ENCODE measurements at regions of chr7 and their contacts with region 1.

Region 1: DNA sequence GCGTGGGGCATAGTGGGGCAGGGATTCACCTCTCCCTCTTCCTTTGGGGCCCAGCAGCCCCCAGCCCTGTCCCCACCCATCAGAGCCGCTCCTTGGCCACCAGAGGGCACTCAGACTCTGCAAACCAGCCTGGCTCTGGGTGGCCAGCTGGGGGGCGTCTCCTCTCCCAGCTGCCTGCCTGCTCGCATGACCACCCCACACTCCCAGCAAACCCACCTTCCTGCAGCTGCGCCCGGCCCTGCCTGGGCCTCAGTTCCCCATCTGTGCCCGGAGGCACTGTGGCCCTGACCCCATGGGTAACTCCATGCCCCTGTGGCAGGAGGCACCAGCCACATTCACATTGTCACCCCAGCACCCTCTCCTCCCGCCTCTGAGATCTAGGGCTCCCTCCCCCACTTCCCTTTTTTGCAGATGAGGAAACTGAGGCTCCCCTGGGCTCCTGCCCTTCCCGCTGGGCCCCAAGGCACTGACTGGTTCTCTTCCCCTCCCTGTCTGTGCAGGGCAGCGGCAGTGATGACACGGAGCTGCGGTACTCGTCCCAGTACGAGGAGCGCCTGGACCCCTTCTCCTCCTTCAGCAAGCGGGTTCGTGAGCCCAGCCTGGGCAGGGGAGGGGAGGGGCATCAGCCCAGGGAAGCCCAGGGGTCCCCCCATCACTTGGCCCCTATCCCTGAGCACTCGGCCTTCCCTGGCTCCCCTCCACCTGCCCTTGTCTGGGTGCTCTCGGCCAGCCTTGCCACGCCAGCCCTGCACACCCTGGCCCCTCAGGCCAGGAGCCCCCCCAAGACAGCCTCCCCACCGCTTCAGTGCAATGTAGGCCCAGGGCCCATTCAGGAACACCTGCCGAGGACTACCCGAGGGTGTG is 6.9 kb upstream of the SH2B2 start:
- DNase-seq: peak; percentile 47 to 77 (median 76)
- ATAC-seq: peak; percentile 76 to 84
- H3K4me3 ChIP-seq: no peak overlapping the region
- H3K27ac ChIP-seq: no peak overlapping the region
- H3K4me1 ChIP-seq: no peaks in the 10 kb centered on the region
- H3K27me3 ChIP-seq: no peaks in the 10 kb centered on the region

Region 2: DNA sequence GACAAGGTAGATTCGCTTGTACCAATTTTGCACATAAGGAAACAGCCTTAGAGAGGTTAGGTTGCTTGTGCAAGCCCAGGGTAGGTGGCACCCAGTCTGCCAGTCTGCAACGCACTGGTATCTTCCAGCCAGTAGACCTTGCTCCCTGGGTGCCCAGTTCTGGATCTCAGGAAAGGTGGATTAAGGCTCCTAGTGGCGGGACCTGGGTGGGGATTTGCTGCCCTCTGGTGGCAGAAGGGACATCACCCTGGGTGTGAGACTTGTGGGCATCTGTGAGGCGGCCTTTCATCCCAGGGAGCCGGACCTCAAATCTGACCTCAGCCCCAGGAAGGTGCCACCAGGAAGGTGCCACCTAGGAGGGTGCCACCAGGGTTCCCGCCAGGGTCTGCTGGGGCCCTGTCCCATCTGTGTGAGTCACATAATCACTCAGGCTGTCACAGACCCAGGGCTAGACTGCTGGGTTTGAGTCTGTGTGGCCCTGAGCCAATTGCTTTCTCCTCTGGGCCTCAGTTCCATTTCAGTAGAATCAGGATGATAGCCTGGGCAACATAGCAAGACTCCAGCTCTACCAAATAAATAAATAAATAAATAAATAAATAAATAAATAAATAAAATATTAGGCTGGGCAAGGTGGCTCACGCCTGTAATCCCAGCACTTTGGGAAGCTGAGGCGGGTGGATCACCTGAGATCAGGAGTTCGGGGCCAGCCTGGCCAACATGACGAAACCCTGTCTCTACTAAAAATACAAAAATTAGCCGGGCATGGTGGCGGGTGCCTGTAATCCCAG is 111.1 kb after region 1 on chr7:
- intact Hi-C with region 1: loop called in 3 of 4 experiments (anchors 2 to 10 kb)
- DNase-seq: peak; percentile 81 to 92 (median 90)
- ATAC-seq: peak; percentile 81 to 83
- H3K4me3 ChIP-seq: no peak overlapping the region
- H3K27ac ChIP-seq: no peak overlapping the region
- H3K4me1 ChIP-seq: no peaks in the 10 kb centered on the region
- H3K27me3 ChIP-seq: no peaks in the 10 kb centered on the region

Region 3: DNA sequence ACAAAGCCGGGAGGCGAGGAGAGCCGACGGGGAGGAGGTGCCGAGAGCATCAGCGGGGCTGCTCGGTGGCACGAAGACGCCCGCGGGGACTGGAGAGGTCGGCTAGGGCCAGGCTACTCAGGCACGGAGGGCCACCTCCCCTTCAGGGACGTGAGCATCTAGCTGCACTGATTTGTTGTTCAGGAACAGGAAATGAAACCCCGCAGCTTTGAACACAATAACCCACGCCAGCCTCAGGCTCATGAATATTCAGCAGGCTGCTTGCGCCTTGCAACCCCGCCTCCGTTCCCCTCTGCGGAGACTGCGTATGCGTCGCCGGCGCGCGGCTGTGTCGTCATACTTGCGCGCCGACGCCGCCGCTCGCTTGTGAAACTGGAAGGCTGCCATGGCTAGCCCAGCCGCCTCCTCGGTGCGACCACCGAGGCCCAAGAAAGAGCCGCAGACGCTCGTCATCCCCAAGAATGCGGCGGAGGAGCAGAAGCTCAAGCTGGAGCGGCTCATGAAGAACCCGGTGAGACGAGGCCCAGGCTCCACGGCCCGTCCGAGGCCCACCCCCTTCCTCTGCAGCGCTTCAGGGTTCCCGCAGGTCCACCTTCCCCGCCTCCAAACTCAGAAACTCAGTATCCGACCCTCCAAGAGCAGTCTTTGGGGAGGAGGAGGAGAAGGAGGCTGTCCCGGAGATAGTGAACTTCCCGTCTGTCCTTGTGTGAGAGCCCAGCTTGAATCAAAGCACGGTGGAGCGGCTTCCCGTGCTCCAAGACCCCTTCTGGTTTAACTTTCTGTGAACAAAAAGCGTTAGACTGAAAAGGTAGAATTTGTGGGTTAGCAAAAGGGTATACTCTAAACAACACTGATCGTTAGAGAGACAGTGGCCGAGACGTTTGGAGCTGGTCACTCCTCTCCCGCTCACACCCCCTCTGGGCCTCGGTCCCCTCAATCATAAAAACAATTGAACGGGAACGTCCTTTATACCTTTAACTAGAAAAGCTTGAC is 116.6 kb after region 1 on chr7 and contains the start of gene PRKRIP1:
- intact Hi-C with region 1: loop called in 3 of 4 experiments (anchors 2 to 10 kb)
- DNase-seq: peak; percentile 85 to 91 (median 88)
- ATAC-seq: peak; percentile 94 to 95
- H3K4me3 ChIP-seq: peak within 1 kb of the TSS; percentile 91
- H3K27ac ChIP-seq: peak within 1 kb of the TSS; percentile 82
- H3K4me1 ChIP-seq: peaks cover 2% of the 10 kb centered on the region
- H3K27me3 ChIP-seq: no peaks in the 10 kb centered on the region
- total RNA-seq, gene PRKRIP1: 14.6 to 20.5 (median 15.3) TPM

Region 4: DNA sequence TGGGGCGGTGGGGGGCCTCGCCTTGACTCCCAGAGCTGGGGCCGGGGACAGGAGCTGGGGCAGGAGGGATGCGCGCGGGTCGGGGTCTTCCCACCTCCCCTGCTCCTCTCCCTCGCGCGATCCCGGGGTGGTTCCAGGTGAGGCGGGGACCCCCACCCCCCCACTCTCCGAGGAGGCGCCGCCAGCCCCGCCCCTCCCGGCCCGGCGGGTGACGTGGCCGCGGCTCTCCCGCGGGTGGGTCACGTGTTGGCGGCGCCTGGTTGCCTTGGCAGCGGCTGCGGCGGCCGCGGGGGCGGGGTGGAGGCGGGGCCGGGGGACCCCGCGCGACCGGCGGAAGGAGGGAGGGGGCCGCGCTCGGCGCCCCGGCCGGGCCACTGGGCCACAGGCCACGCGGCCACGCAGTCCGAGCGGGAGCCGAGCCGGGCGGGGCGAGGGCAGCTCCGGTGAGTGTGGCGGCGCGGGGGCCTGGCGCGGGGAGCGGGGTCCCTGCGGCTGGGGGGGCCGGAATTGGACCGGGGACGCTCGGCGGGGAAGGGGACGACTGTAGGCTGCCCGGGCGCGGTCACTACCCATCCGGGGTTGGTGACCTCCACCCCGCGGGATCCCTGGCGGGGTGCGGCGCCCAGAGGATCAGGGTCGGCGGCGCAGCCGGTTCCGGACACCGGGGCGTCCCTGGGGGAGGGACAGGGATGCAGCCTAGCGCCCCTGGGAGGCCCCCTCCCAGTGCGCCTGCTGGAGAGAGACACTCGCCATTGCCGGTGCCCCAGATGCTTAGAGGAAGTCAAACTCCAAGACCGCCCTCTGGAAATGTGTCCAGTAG is 153.7 kb after region 1 on chr7 and contains the start of gene ORAI2:
- intact Hi-C with region 1: no loop called
- DNase-seq: peak; percentile 84 to 94 (median 92)
- ATAC-seq: peak; percentile 84 to 85
- H3K4me3 ChIP-seq: peak within 1 kb of the TSS; percentile 89
- H3K27ac ChIP-seq: no peak within 1 kb of the TSS
- H3K4me1 ChIP-seq: peaks cover 2% of the 10 kb centered on the region
- H3K27me3 ChIP-seq: no peaks in the 10 kb centered on the region
- total RNA-seq, gene ORAI2: 3.6 to 7.4 (median 4.8) TPM

Measured in right cardiac atrium (tissue), 5 donors.